PC-3 (cell line): ENCODE measurements at regions of chr9 and their contacts with region 1.

Region 1: GRCh38 chr9:18658764-18659705 is 185.1 kb downstream of the ADAMTSL1 start:
- DNase-seq: peak; percentile 78
- ATAC-seq: peak; percentile 35
- H3K4me3 ChIP-seq: no peak overlapping the region
- H3K27ac ChIP-seq: peak overlapping the region; percentile 30; the same call in 1 of the 2 replicates
- H3K4me1 ChIP-seq: peaks cover 16% of the 10 kb centered on the region
- H3K27me3 ChIP-seq: no peaks in the 10 kb centered on the region
- CTCF ChIP-seq: no peak

Region 2: GRCh38 chr9:18260521-18260920 is 398.5 kb before region 1 on chr9:
- CTCF ChIA-PET with region 1: interaction called, 5 read pairs
- POLR2A ChIA-PET with region 1: interaction called, 30 read pairs
- intact Hi-C with region 1: no loop called
- DNase-seq: peak; percentile 61
- ATAC-seq: no peak
- H3K4me3 ChIP-seq: no peak overlapping the region
- H3K27ac ChIP-seq: no peak overlapping the region
- H3K4me1 ChIP-seq: peaks cover 11% of the 10 kb centered on the region
- H3K27me3 ChIP-seq: no peaks in the 10 kb centered on the region
- CTCF ChIP-seq: no peak

Region 3: GRCh38 chr9:18707061-18707461 is 48.0 kb after region 1 on chr9:
- CTCF ChIA-PET with region 1: interaction called, 11 read pairs
- POLR2A ChIA-PET with region 1: no interaction called
- intact Hi-C with region 1: no loop called
- DNase-seq: no peak
- ATAC-seq: no peak
- H3K4me3 ChIP-seq: no peak overlapping the region
- H3K27ac ChIP-seq: no peak overlapping the region
- H3K4me1 ChIP-seq: no peaks in the 10 kb centered on the region
- H3K27me3 ChIP-seq: no peaks in the 10 kb centered on the region
- CTCF ChIP-seq: no peak